ENCODE measurements at regions of chr12 and their contacts with region 1.

Region 1: DNA sequence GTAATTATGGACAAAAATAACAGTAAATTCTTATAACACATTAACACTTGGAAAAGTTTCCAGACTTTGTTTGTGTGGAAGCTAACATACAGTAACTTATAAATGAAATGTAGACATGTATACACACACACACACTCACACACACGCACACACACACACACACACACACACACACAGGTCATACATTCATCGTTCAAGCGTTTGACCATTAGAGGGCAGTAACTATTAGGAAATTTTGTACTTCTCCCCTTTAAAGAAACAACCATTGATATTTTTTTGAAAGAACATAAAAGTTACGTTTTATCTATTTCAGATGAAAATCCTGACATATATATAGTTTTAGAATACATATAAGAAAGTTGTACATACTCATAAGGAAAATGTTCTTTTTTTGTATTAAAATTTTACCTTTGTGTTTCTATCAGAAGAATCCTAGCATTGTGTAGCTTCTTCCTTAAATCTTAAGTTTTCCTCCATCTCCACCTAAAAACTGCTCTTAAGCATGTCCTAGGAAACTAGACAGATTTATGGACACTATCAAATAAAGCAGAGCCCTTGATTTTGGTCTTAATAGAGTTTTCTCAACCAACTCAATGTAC is 29.0 kb downstream of the PTPRQ start:
- DNase-seq: peak; percentile 3
- ATAC-seq: peak; percentile 86
- H3K4me3 ChIP-seq: no peak overlapping the region
- H3K27ac ChIP-seq: no peak overlapping the region
- H3K4me1 ChIP-seq: no peaks in the 10 kb centered on the region
- H3K27me3 ChIP-seq: no peaks in the 10 kb centered on the region
- CTCF ChIP-seq: peak; percentile 48 to 58 (median 57); a peak in 5 of 6 replicates
- EP300 ChIP-seq: no peak
- POLR2A ChIP-seq: no peak
- RAD21 ChIP-seq: peak; percentile 74

Region 2: GRCh38 chr12:79776111-79776510 is 696.9 kb before region 1 on chr12:
- CTCF ChIA-PET with region 1: no interaction called
- POLR2A ChIA-PET with region 1: no interaction called
- RAD21 ChIA-PET with region 1: no interaction called
- SMC1A ChIA-PET with region 1: no interaction called
- in situ Hi-C with region 1: no loop called
- intact Hi-C with region 1: no loop called
- DNase-seq: no peak
- ATAC-seq: no peak
- H3K4me3 ChIP-seq: no peak overlapping the region
- H3K27ac ChIP-seq: no peak overlapping the region
- H3K4me1 ChIP-seq: no peaks in the 10 kb centered on the region
- H3K27me3 ChIP-seq: no peaks in the 10 kb centered on the region
- CTCF ChIP-seq: no peak
- EP300 ChIP-seq: no peak
- POLR2A ChIP-seq: no peak
- RAD21 ChIP-seq: no peak

Region 3: GRCh38 chr12:80709811-80710726 is 237.1 kb after region 1 on chr12:
- CTCF ChIA-PET with region 1: interaction called, 9 read pairs
- POLR2A ChIA-PET with region 1: no interaction called
- RAD21 ChIA-PET with region 1: no interaction called
- SMC1A ChIA-PET with region 1: no interaction called
- in situ Hi-C with region 1: no loop called
- intact Hi-C with region 1: loop called (anchors 5 kb)
- DNase-seq: no peak
- ATAC-seq: peak; percentile 91
- H3K4me3 ChIP-seq: no peak overlapping the region
- H3K27ac ChIP-seq: no peak overlapping the region
- H3K4me1 ChIP-seq: no peaks in the 10 kb centered on the region
- H3K27me3 ChIP-seq: peaks cover 9 to 20% of the 10 kb centered on the region in 2 experiments
- CTCF ChIP-seq: peak; percentile 54 to 80 (median 59); a peak in 5 of 6 replicates
- EP300 ChIP-seq: no peak
- POLR2A ChIP-seq: no peak
- RAD21 ChIP-seq: peak; percentile 49

Region 4: GRCh38 chr12:80763874-80764273 is 290.9 kb after region 1 on chr12:
- CTCF ChIA-PET with region 1: interaction called, 10 read pairs
- POLR2A ChIA-PET with region 1: no interaction called
- RAD21 ChIA-PET with region 1: interaction called, 3 read pairs
- SMC1A ChIA-PET with region 1: interaction called, 5 read pairs
- in situ Hi-C with region 1: loop called (anchors 10 kb)
- intact Hi-C with region 1: loop called (anchors 1 kb)
- DNase-seq: no peak
- ATAC-seq: peak; percentile 21; the same call in 2 of the 3 replicates
- H3K4me3 ChIP-seq: no peak overlapping the region
- H3K27ac ChIP-seq: no peak overlapping the region
- H3K4me1 ChIP-seq: no peaks in the 10 kb centered on the region
- H3K27me3 ChIP-seq: no peaks in the 10 kb centered on the region
- CTCF ChIP-seq: peak; percentile 36 to 51 (median 50); a peak in 5 of 6 replicates
- EP300 ChIP-seq: no peak
- POLR2A ChIP-seq: no peak
- RAD21 ChIP-seq: peak; percentile 86

Region 5: DNA sequence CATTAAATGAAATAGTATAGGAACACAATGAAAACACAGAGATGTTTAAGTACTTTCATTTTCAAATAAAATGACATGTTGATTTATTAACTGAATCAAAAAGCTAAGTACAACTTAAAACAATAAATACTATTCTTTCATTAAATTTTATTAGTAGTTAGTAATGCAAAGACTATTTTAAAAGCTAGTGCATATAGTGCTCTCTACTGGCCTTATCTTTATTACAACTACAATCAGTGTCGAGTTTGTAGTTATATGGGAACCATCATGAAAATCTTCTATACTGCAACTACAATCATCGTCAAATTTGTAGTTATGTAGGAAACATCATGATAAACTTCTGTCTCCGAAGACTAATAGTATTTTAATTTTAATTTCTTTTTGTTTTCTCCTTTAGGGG is 473.6 kb after region 1 on chr12:
- CTCF ChIA-PET with region 1: interaction called, 5 read pairs
- POLR2A ChIA-PET with region 1: no interaction called
- RAD21 ChIA-PET with region 1: interaction called, 4 read pairs
- SMC1A ChIA-PET with region 1: no interaction called
- in situ Hi-C with region 1: no loop called
- intact Hi-C with region 1: loop called (anchors 2 kb)
- DNase-seq: no peak
- ATAC-seq: peak; percentile 52
- H3K4me3 ChIP-seq: no peak overlapping the region
- H3K27ac ChIP-seq: no peak overlapping the region
- H3K4me1 ChIP-seq: no peaks in the 10 kb centered on the region
- H3K27me3 ChIP-seq: no peaks in the 10 kb centered on the region
- CTCF ChIP-seq: no peak; a peak in 1 of 6 replicates
- EP300 ChIP-seq: no peak
- POLR2A ChIP-seq: no peak
- RAD21 ChIP-seq: peak; percentile 38; the same call in 1 of the 2 replicates

Region 6: DNA sequence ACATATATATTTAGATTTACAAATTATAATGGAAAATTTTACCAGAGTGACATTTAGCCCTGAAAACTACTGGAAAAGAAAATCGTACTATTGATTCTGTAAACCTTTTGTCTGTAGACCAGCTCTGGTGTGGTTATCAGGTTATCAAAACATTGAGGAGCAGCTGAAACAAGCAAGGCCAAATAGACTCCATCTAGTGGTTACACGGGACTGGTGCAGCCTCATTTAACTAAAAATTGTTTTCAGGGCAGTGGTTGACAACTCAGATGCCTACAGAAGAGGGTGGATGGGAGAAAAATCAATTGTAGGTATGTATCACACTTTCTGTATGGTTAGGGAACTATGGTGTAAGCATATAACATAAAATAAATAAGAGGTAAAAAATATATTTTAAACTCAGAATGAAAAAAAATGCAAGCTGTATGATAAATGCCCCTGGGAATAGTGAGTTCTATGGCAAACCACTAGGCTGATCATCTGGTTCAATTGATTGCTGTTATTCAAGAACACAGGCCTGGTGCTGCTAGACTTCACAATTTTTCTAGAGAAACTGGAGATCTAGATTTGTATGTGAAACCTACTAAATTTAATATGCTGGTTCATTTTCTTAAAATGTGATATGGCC is 656.0 kb after region 1 on chr12:
- CTCF ChIA-PET with region 1: interaction called, 3 read pairs
- POLR2A ChIA-PET with region 1: no interaction called
- RAD21 ChIA-PET with region 1: no interaction called
- SMC1A ChIA-PET with region 1: no interaction called
- in situ Hi-C with region 1: no loop called
- intact Hi-C with region 1: loop called (anchors 2 kb)
- DNase-seq: peak; percentile 5
- ATAC-seq: peak; percentile 90
- H3K4me3 ChIP-seq: no peak overlapping the region
- H3K27ac ChIP-seq: no peak overlapping the region
- H3K4me1 ChIP-seq: no peaks in the 10 kb centered on the region
- H3K27me3 ChIP-seq: no peaks in the 10 kb centered on the region
- CTCF ChIP-seq: peak; percentile 66 to 81 (median 80)
- EP300 ChIP-seq: no peak
- POLR2A ChIP-seq: no peak
- RAD21 ChIP-seq: peak; percentile 60